A673 (cell line): ENCODE measurements at regions of chr16 and their contacts with region 1.

Region 1: DNA sequence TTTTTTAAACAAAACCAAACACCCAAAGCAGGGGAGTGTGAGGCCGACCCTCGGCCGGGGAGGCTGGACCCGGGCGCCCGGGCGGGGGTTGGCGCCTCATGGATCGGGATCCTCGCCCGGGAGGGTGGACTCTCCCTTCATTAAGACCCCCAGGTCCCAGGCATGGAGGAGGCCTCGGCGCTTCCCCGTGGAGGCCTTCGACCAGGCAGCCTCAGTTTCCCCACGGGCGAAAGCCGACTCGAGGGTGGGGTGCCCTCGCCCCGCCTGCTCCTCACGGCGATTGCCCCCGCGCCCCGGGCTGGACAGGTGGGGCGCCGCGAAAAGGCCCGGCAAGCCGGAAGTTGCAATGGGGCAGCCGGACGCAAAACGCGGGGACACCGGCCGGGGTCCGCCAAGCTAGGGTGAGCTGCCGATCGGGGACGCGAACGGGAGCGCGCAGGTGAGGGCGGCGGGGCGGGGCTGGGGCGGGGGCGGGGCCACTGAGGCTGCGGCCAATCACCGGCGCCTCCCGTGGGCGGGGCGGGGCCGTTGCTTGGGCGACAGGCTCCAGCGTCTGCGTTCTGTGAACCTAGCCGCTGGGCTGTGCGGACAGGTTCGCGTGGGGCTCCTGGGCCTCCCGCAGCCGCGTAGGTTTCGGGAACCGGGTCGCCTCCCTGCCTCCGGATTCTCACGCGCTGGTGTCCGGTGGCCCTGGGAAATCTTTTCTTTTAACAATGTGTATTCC is 6.0 kb upstream of the ZNF205 start:
- DNase-seq: peak; percentile 93
- H3K4me3 ChIP-seq: peak overlapping the region; percentile 74
- H3K27ac ChIP-seq: peak overlapping the region; percentile 77
- H3K4me1 ChIP-seq: peaks cover 8% of the 10 kb centered on the region
- H3K27me3 ChIP-seq: no peaks in the 10 kb centered on the region
- CTCF ChIP-seq: no peak

Region 2: DNA sequence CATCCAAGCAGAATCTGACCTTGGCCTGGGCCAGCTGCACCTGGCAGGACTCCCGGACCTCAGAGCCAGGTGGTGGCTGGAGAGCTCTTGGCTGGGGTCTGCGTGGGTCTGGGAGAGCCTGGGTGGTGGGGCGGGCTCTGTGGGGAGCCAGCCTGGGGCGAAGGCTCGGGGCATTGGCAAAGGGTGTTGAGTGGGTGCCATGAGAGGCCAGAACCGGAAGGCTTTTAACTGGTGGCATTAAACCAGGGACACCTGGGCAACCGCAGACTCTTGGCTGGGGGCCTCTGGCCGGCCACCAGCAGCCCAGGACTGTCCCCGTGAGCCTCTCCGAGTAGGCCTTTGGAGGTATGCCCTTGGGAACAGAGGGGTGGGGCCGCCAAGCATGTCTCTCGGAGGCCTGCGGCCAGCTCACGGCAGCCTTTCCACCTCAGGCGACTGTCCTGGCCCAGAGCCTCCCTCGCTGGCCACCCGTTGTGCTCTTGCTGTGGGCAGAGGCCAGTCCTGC is 403.1 kb before region 1 on chr16:
- CTCF ChIA-PET with region 1: no interaction called
- POLR2A ChIA-PET with region 1: no interaction called
- intact Hi-C with region 1: no loop called
- DNase-seq: no peak
- H3K4me3 ChIP-seq: no peak overlapping the region
- H3K27ac ChIP-seq: no peak overlapping the region
- H3K4me1 ChIP-seq: no peaks in the 10 kb centered on the region
- H3K27me3 ChIP-seq: no peaks in the 10 kb centered on the region
- CTCF ChIP-seq: no peak

Region 3: DNA sequence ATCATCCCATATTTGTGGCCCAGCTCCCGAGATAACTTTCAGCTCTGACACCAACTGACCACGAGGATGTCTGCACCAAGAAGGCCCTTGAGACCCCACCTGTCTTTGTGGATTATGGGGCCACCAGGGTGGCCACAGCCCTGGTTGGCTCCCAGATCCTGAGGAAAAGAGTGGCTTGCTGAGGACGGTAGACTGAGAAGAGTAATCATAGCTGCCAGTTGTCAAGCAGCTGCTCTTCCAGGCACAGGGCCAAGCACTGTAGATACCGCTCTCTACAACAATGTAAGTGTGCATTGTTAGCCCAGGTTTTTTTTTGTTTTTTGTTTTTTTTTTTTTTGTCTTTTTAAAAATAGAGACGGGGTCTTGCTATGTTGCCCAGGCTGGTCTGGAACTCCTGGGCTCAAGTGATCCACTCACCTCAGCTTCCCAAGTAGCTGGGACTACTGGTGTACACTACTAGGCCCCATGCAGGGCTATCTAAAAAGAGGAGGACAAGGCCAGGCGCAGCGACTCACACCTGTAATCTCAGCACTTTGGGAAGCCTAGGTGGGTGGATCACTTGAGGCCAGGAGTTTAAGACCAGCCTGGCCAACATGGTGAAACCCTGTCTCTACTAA is 15.6 kb after region 1 on chr16:
- CTCF ChIA-PET with region 1: no interaction called
- POLR2A ChIA-PET with region 1: interaction called, 15 read pairs
- intact Hi-C with region 1: no loop called
- DNase-seq: no peak
- H3K4me3 ChIP-seq: no peak overlapping the region
- H3K27ac ChIP-seq: no peak overlapping the region
- H3K4me1 ChIP-seq: no peaks in the 10 kb centered on the region
- H3K27me3 ChIP-seq: no peaks in the 10 kb centered on the region
- CTCF ChIP-seq: no peak